Activated CD4-positive, alpha-beta T cell treated with anti-CD3 and anti-CD28 coated beads for 36 hours (primary cell): ENCODE measurements at regions of chr17 and their contacts with region 1.

Region 1: DNA sequence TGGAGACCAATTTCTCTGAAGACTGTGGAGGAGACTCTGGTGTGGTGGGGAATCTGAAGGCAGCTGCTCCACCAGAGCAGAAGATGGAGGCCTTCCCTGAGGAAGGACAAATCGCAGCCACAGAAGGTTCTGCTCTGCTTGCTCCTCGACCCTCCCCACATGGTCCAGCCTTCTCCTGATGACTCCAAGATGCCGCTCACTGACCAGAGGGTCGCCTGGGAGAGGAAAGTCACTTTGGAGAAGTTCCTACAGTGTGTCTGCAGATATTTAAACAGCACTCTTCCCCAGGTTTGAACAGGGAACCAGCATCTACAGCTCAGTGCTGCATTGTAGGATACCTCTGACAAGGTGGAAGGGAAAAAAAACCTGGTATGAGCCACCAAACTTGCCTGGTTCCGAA is 21.0 kb upstream of the SUPT4H1 start:
- DNase-seq: no peak
- ATAC-seq: no peak
- H3K4me3 Mint-ChIP-seq: no peak overlapping the region
- H3K27ac Mint-ChIP-seq: no peak overlapping the region
- H3K4me1 Mint-ChIP-seq: peaks cover 5% of the 10 kb centered on the region
- H3K27me3 Mint-ChIP-seq: no peaks in the 10 kb centered on the region

Region 2: DNA sequence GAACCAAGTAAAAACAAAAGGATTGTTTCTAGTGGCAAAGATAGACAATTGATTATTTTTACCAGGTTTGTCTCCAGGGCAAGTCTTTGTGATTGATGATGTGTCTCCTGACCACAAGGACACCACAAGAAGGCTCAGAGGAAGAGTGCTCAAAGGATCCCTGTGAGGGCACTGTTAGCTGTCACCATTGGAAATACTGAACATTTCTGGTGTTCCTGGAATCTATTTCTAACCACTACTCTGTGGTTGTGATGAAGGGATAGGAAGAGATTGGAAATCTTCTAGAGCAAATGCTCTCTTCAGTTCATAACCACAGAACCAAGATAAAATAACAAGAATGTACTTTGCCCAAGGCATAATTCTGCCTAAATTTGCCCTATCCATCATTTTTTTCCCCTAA is 29.0 kb after region 1 on chr17:
- CTCF ChIA-PET with region 1: interaction called, 6 read pairs
- POLR2A ChIA-PET with region 1: no interaction called
- intact Hi-C with region 1: loop called in 1 of 2 experiments (anchors 2 kb)
- DNase-seq: peak; percentile 13
- ATAC-seq: peak; percentile 57
- H3K4me3 Mint-ChIP-seq: no peak overlapping the region
- H3K27ac Mint-ChIP-seq: peak overlapping the region; percentile 2
- H3K4me1 Mint-ChIP-seq: peaks cover 13% of the 10 kb centered on the region
- H3K27me3 Mint-ChIP-seq: no peaks in the 10 kb centered on the region

Region 3: GRCh38 chr17:59026176-59026939 is 653.4 kb after region 1 on chr17:
- CTCF ChIA-PET with region 1: no interaction called
- POLR2A ChIA-PET with region 1: no interaction called
- intact Hi-C with region 1: no loop called
- DNase-seq: no peak
- ATAC-seq: no peak
- H3K4me3 Mint-ChIP-seq: no peak overlapping the region
- H3K27ac Mint-ChIP-seq: no peak overlapping the region
- H3K4me1 Mint-ChIP-seq: peaks cover 8% of the 10 kb centered on the region
- H3K27me3 Mint-ChIP-seq: no peaks in the 10 kb centered on the region